ENCODE measurements at regions of chr5 and their contacts with region 1.

Region 1: DNA sequence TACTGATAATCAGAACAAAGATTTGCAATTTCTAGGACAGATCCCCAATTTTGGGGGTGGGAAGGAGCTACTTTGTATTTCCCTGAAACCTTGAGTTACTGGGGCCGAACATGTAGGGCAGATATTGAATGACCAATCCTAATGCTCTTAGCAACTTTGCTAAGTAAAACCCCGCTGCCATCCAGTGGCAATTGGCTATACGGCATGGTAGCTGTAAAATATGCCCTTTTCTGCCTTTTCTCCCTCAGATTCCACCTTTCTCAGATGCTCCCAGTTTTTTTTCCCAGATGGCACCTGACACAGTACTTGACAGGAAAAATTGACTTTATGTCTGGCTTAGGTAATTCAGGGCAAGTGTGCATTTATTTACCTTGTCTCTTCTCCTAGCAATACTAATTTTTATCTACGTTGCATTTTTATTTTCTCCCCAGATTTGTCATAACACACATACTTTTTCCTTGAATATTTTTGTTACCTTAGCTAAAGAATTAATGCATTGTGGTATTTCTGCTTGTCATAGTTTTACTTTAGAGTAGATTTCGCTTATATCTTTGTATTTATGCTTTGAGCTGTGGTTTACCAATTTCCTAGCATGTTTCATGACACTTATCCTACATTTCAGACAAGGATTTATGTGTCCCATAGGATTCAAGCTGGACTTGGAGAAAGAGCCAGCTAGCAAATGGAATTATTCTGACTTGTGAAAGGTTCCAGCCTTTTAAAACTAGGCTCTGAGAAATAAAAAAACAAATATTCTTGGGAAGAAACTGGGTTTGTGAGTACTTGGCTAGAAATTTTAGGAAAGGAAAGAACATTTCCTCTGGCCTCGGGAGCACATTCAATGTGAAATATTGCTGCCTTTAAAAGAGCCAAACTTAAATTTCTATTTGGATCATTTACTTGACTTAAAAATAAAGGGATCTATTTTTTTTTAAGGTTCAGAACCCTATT is 37.4 kb downstream of the PIK3R1 start:
- DNase-seq: peak; percentile 10 to 62 (median 36)
- ATAC-seq: peak; percentile 89
- H3K4me3 ChIP-seq: no peak overlapping the region
- H3K27ac ChIP-seq: no peak overlapping the region
- H3K4me1 ChIP-seq: no peaks in the 10 kb centered on the region
- H3K27me3 ChIP-seq: no peaks in the 10 kb centered on the region
- CTCF ChIP-seq: peak; percentile 56 to 75 (median 64)
- EP300 ChIP-seq: no peak
- POLR2A ChIP-seq: no peak
- RAD21 ChIP-seq: peak; percentile 83 to 86

Region 2: GRCh38 chr5:67493676-67494075 is 759.3 kb before region 1 on chr5:
- CTCF ChIA-PET with region 1: interaction called, 3 read pairs
- POLR2A ChIA-PET with region 1: no interaction called
- in situ Hi-C with region 1: no loop called
- intact Hi-C with region 1: loop called (anchors 5 kb)
- DNase-seq: peak in 2 of 4 experiments; percentile 9 to 27
- ATAC-seq: peak; percentile 63; the same call in 1 of the 3 replicates
- H3K4me3 ChIP-seq: no peak overlapping the region
- H3K27ac ChIP-seq: no peak overlapping the region
- H3K4me1 ChIP-seq: no peaks in the 10 kb centered on the region
- H3K27me3 ChIP-seq: no peaks in the 10 kb centered on the region
- CTCF ChIP-seq: peak in 1 of 3 experiments; percentile 29; a peak in 1 of 6 replicates
- EP300 ChIP-seq: no peak
- POLR2A ChIP-seq: no peak
- RAD21 ChIP-seq: peak; percentile 15 to 38; a peak in 2 of 4 replicates

Measured in K562 (cell line).